Caco-2 (cell line): ENCODE measurements at regions of chr1 and their contacts with region 1.

Region 1: GRCh38 chr1:116485071-116485735 is 85.6 kb downstream of the CD58 start:
- DNase-seq: peak; percentile 85 to 87
- H3K4me3 ChIP-seq: no peak overlapping the region
- H3K4me3 Mint-ChIP-seq: no peak overlapping the region
- H3K27ac Mint-ChIP-seq: no peak overlapping the region
- H3K4me1 ChIP-seq: peaks cover 27% of the 10 kb centered on the region
- H3K4me1 Mint-ChIP-seq: no peaks in the 10 kb centered on the region
- H3K27me3 ChIP-seq: no peaks in the 10 kb centered on the region
- H3K27me3 Mint-ChIP-seq: no peaks in the 10 kb centered on the region
- CTCF ChIP-seq: peak; percentile 59 to 67

Region 2: DNA sequence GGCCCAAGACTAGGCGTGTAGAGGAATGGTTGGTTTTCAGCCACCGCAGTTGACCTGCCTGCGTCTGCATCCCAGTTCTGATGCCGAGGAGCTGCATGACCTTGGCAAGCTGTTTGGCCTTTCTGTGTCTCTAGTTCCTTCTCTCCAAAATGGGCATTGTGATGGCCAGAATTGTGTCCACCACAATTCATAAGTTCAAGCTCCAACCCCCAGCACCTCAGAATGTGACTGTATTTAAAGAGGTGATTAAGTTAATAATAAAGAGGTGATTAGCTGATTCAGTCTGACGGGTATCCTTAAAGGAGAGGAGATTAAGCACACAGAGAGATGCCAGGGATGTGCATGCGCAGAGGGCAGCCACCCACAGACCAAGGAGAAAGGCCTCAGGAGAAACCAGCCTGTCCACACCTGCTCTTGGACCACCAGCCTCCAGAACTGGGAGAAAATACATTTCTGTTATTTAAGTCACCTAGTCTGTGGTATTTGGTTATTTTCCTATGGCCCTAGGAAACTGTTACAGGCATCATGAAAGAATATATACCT is 345.5 kb before region 1 on chr1:
- CTCF ChIA-PET with region 1: interaction called, 71 read pairs
- POLR2A ChIA-PET with region 1: no interaction called
- intact Hi-C with region 1: loop called (anchors 1 kb)
- DNase-seq: no peak
- H3K4me3 ChIP-seq: no peak overlapping the region
- H3K4me3 Mint-ChIP-seq: no peak overlapping the region
- H3K27ac Mint-ChIP-seq: no peak overlapping the region
- H3K4me1 ChIP-seq: no peaks in the 10 kb centered on the region
- H3K4me1 Mint-ChIP-seq: peaks cover 2% of the 10 kb centered on the region
- H3K27me3 ChIP-seq: no peaks in the 10 kb centered on the region
- H3K27me3 Mint-ChIP-seq: no peaks in the 10 kb centered on the region
- CTCF ChIP-seq: no peak

Region 3: DNA sequence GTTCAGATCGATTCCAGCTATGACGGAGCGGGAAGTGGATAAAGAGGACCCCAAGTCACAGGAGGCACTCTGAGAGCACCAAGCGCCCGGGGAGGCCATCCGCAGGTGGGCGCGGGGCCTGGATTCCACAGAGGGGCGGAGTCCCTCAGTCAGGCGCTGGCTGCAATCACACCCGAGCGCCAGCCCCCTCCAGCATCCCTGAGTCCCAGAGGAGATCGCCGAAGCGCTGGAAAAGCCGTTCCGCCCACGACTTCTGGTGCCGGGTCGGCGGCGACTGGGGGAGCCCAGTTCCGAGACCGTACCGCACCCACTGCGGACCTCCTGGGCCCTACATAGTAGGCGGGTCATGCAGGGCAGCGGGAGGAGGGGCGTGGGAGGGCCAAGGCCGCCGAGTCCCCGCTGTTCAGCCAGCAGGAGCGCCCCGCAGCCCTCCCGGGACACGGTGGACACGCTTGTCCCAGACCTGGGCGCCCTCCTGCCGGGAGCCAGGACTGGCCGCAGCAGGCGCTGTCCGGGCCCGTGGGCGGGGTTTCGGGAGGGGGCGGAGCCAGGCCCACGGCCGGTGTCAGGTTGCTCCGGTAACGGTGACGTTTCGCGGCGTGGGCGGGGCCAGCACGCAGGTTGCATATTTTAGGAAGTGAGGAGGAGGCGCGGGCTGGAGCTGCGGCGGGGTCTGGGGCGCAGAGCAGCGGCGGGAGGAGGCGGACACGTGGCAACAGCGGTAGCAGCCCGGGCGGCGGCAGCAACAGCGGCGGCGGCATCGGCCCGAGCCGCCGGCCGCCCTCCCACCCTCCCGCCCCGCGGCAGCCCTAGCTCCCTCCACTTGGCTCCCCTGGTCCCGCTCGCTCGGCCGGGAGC is 112.4 kb before region 1 on chr1 and contains the start of gene ATP1A1:
- CTCF ChIA-PET with region 1: interaction called, 4 read pairs
- POLR2A ChIA-PET with region 1: no interaction called
- intact Hi-C with region 1: loop called (anchors 5 kb)
- DNase-seq: peak; percentile 95 to 97
- H3K4me3 ChIP-seq: peak within 1 kb of the TSS; percentile 86
- H3K4me3 Mint-ChIP-seq: peak within 1 kb of the TSS; percentile 89
- H3K27ac Mint-ChIP-seq: peak within 1 kb of the TSS; percentile 91
- H3K4me1 ChIP-seq: peaks cover 23% of the 10 kb centered on the region
- H3K4me1 Mint-ChIP-seq: peaks cover 15% of the 10 kb centered on the region
- H3K27me3 ChIP-seq: no peaks in the 10 kb centered on the region
- H3K27me3 Mint-ChIP-seq: no peaks in the 10 kb centered on the region
- CTCF ChIP-seq: no peak
- total RNA-seq, gene ATP1A1: 479 and 508 TPM in 2 replicates

Region 4: DNA sequence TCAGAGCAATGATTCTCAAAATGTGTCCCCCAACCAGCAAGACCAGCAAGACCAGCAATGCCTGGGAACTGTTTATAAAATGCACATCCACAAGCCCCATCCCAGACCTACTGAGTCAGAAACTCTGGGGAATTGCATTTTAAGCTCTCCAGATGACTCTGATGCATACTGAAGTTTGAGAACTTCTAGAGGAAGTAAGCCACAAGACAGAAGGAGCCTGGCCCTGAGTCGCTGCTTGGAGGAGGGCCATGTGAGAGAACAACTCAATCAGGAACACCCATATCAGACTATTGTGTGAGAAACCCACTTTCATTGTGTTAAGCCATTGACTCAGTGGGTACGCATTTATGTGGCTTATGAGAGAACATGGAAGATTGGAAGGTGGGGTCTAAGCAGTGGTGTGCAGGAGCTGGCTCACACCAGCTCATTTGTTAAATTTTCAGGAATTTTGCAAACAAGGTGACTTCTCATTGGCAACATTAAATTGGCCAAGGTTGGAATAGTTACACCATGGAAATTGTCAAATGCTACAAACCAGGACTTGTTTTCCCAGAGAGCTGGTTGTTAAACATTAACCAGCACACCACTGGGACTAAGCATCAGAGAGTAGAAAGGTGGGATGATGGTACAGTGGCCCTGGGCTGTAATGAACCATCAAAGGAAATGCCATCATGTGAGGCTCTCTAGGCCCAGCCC is 73.3 kb before region 1 on chr1:
- CTCF ChIA-PET with region 1: interaction called, 11 read pairs
- POLR2A ChIA-PET with region 1: interaction called, 3 read pairs
- intact Hi-C with region 1: loop called (anchors 1 kb)
- DNase-seq: peak; percentile 60 to 67
- H3K4me3 ChIP-seq: no peak overlapping the region
- H3K4me3 Mint-ChIP-seq: no peak overlapping the region
- H3K27ac Mint-ChIP-seq: no peak overlapping the region
- H3K4me1 ChIP-seq: peaks cover 16% of the 10 kb centered on the region
- H3K4me1 Mint-ChIP-seq: no peaks in the 10 kb centered on the region
- H3K27me3 ChIP-seq: no peaks in the 10 kb centered on the region
- H3K27me3 Mint-ChIP-seq: no peaks in the 10 kb centered on the region
- CTCF ChIP-seq: no peak

Region 5: DNA sequence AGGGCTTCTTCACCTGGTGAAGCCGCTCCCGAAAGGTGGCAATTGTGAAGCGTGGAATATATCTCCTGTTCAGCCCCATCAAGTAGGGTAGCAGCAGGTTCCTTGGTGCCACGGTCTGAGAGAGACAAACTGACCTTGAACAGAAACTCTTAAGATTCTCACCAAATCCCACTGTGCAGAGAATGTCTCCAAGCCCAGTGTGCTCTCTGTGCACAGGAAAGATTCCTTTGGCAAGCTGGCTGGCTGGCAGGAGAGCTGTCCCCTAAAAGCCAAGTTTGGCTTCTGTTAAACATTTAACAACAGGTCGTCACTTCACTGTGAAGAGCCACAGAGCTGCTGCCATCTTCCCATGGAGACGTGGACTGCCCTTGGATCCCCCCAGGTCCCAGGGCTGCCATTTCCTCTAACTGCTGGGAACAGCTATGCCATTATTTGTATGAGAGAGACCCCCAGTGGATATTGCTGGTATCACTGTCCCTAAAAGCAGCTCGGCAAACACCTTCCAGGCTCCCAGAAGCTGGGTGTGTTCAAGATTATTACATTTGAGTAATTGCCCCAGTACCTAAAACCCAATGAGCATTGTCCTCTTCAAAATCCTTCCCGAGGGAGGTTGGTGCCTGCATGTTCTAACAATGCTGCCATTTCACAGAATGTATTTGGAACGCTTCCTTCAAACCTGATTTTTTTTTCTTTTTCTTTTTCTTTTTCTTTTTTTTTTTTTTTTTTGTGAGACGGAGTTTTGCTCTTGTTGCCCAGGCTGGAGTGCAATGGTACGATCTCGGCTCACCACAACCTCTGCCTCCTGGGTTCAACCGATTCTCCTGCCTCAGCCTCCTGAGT is 13.8 kb after region 1 on chr1:
- CTCF ChIA-PET with region 1: interaction called, 13 read pairs
- POLR2A ChIA-PET with region 1: no interaction called
- intact Hi-C with region 1: no loop called
- DNase-seq: peak; percentile 63 to 73
- H3K4me3 ChIP-seq: no peak overlapping the region
- H3K4me3 Mint-ChIP-seq: no peak overlapping the region
- H3K27ac Mint-ChIP-seq: no peak overlapping the region
- H3K4me1 ChIP-seq: peaks cover 17% of the 10 kb centered on the region
- H3K4me1 Mint-ChIP-seq: peaks cover 20% of the 10 kb centered on the region
- H3K27me3 ChIP-seq: no peaks in the 10 kb centered on the region
- H3K27me3 Mint-ChIP-seq: no peaks in the 10 kb centered on the region
- CTCF ChIP-seq: peak; percentile 65 to 69